ENCODE measurements at regions of chr12 and their contacts with region 1.

Region 1: GRCh38 chr12:6533923-6534694 is at the start of gene GAPDH:
- DNase-seq: peak; percentile 98
- H3K4me3 Mint-ChIP-seq: peak within 1 kb of the TSS; percentile 88
- H3K27ac Mint-ChIP-seq: peak within 1 kb of the TSS; percentile 95
- H3K4me1 Mint-ChIP-seq: peaks cover 34% of the 10 kb centered on the region
- H3K27me3 Mint-ChIP-seq: no peaks in the 10 kb centered on the region
- CTCF ChIP-seq: no peak
- total RNA-seq, gene GAPDH: 2,995 and 4,097 TPM in 2 replicates

Region 2: GRCh38 chr12:5808981-5809380 is 725.1 kb before region 1 on chr12:
- CTCF ChIA-PET with region 1: no interaction called
- POLR2A ChIA-PET with region 1: no interaction called
- intact Hi-C with region 1: no loop called
- DNase-seq: peak; percentile 40
- H3K4me3 Mint-ChIP-seq: no peak overlapping the region
- H3K27ac Mint-ChIP-seq: no peak overlapping the region
- H3K4me1 Mint-ChIP-seq: no peaks in the 10 kb centered on the region
- H3K27me3 Mint-ChIP-seq: no peaks in the 10 kb centered on the region
- CTCF ChIP-seq: no peak

Region 3: GRCh38 chr12:6335451-6336078 is 198.5 kb before region 1 on chr12:
- CTCF ChIA-PET with region 1: interaction called, 6 read pairs
- POLR2A ChIA-PET with region 1: interaction called, 4 read pairs
- intact Hi-C with region 1: loop called (anchors 5 kb)
- DNase-seq: peak; percentile 85
- H3K4me3 Mint-ChIP-seq: no peak overlapping the region
- H3K27ac Mint-ChIP-seq: no peak overlapping the region
- H3K4me1 Mint-ChIP-seq: peaks cover 24% of the 10 kb centered on the region
- H3K27me3 Mint-ChIP-seq: no peaks in the 10 kb centered on the region
- CTCF ChIP-seq: peak; percentile 44

Region 4: DNA sequence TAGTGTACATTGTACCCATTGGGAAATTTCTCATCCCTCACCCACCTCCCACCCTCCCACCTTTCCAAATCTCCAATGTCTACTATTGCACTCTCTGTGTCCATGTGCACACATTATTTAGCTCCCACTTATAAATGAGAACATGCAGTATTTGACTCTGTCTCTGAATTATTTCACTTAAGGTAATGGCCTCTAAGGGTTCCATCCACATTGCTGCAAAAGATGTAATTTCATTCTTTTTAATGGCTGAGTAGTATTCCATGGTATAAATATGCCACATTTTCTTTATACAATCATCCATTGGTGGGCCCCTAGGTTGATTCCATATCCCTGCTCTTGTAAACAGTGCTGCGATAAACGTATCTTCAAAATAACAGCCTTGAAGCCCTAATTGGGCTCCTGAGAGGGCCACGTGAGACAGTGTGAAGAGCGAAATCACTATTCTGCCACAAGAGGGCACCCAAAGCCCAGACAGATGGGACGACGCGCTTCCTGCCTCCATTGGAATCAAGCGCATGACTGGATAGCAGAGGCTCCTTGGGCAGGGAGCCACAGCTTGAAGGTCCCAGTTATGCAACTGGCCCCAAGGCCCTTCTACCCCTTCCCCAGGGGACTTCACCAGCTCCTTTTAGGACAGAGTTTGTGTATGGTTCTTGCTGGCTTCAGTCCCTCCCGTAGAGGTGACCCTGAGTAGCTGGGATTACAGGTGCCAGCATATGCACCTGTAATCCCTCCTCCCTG is 110.7 kb before region 1 on chr12:
- CTCF ChIA-PET with region 1: interaction called, 99 read pairs
- POLR2A ChIA-PET with region 1: interaction called, 9 read pairs
- intact Hi-C with region 1: loop called (anchors 1 kb)
- DNase-seq: peak; percentile 96
- H3K4me3 Mint-ChIP-seq: no peak overlapping the region
- H3K27ac Mint-ChIP-seq: no peak overlapping the region
- H3K4me1 Mint-ChIP-seq: peaks cover 5% of the 10 kb centered on the region
- H3K27me3 Mint-ChIP-seq: no peaks in the 10 kb centered on the region
- CTCF ChIP-seq: peak; percentile 88

Region 5: DNA sequence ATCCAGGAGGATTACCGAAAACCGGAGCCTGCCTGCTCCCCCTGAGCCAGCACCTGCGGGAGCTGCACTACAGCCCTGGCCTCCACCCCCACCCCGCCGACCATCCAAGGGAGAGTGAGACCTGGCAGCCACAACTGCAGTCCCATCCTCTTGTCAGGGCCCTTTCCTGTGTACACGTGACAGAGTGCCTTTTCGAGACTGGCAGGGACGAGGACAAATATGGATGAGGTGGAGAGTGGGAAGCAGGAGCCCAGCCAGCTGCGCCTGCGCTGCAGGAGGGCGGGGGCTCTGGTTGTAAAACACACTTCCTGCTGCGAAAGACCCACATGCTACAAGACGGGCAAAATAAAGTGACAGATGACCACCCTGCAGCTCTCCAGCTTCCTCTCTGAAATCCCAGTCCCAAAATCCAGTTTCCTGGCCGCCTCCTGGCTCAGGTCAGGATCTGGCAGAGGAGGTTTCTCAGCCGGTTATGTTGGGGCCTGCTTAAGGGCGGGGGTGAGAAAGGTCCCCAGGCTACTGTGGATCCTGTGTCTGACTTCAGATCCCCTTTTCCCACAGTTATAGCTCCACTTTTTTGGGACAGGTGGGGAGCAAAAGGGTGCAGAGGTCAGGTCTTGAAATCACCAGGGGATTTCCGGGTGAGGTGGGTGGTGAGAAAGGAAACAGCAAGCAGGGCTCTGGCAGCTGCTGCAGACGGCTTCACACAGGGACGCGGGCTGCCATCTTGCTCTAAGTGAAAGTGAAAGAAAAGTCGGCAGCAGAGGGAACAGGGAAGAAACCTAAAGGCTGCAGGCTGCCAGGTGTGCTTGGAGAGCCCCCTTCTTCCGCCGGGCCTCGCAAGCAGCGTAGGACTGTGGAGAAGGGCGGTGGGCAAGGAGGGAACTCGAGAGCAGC is 82.5 kb before region 1 on chr12 and contains the start of gene TAPBPL:
- CTCF ChIA-PET with region 1: interaction called, 3 read pairs
- POLR2A ChIA-PET with region 1: interaction called, 28 read pairs
- intact Hi-C with region 1: no loop called
- DNase-seq: peak; percentile 72
- H3K4me3 Mint-ChIP-seq: peak within 1 kb of the TSS; percentile 94
- H3K27ac Mint-ChIP-seq: peak within 1 kb of the TSS; percentile 98
- H3K4me1 Mint-ChIP-seq: peaks cover 37% of the 10 kb centered on the region
- H3K27me3 Mint-ChIP-seq: no peaks in the 10 kb centered on the region
- CTCF ChIP-seq: no peak
- total RNA-seq, gene TAPBPL: 8.1 and 9.3 TPM in 2 replicates

Region 6: GRCh38 chr12:6500466-6500865 is 33.6 kb before region 1 on chr12:
- CTCF ChIA-PET with region 1: interaction called, 12 read pairs
- POLR2A ChIA-PET with region 1: interaction called, 15 read pairs
- intact Hi-C with region 1: no loop called
- DNase-seq: no peak
- H3K4me3 Mint-ChIP-seq: no peak overlapping the region
- H3K27ac Mint-ChIP-seq: no peak overlapping the region
- H3K4me1 Mint-ChIP-seq: peaks cover 3% of the 10 kb centered on the region
- H3K27me3 Mint-ChIP-seq: no peaks in the 10 kb centered on the region
- CTCF ChIP-seq: no peak

Region 7: DNA sequence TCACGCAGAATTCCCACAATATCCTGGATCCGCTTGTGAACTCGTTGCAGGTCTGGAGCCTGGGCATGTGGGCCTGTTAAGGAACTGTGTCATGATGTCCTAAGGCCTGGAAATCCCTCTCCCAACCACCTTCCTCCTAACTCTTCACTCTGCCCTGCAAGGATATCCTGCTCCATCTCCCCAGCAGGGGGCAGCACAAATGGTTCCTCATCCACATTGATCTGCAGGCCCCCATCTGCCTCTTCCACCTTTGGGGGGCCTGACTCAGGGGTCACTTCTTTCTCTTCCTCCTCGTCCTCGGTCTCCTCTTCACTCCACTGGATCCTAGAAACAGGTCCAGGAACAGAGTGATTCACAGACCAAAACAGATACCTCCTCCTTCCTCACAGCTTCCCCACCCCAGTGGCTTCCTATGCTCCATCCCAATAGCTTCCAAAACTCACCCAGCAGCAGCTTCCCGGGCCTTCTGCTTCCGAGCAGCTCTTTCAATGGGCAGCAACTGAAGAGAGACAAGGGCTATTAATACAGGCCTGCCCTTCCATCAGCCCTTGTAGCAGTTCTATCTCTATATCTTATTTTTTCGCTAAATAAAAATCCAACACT is 29.4 kb after region 1 on chr12:
- CTCF ChIA-PET with region 1: interaction called, 34 read pairs
- POLR2A ChIA-PET with region 1: interaction called, 25 read pairs
- intact Hi-C with region 1: no loop called
- DNase-seq: peak; percentile 61
- H3K4me3 Mint-ChIP-seq: no peak overlapping the region
- H3K27ac Mint-ChIP-seq: no peak overlapping the region
- H3K4me1 Mint-ChIP-seq: peaks cover 7% of the 10 kb centered on the region
- H3K27me3 Mint-ChIP-seq: no peaks in the 10 kb centered on the region
- CTCF ChIP-seq: peak; percentile 64

Region 8: GRCh38 chr12:6792522-6793201 is 258.6 kb after region 1 on chr12:
- CTCF ChIA-PET with region 1: no interaction called
- POLR2A ChIA-PET with region 1: no interaction called
- intact Hi-C with region 1: no loop called
- DNase-seq: no peak
- H3K4me3 Mint-ChIP-seq: no peak overlapping the region
- H3K27ac Mint-ChIP-seq: peak overlapping the region; percentile 14
- H3K4me1 Mint-ChIP-seq: no peaks in the 10 kb centered on the region
- H3K27me3 Mint-ChIP-seq: peaks cover 58% of the 10 kb centered on the region
- CTCF ChIP-seq: no peak

Measured in MCF 10A (cell line).